ENCODE measurements at regions of chr2 and their contacts with region 1.

Region 1: GRCh38 chr2:119826370-119826961 is 66.7 kb downstream of the PTPN4 start:
- DNase-seq: peak in 4 of 5 donors; percentile 38 to 49 (median 41)
- H3K4me3 ChIP-seq: no peak overlapping the region
- H3K4me3 Mint-ChIP-seq: no peak overlapping the region
- H3K27ac ChIP-seq: no peak overlapping the region
- H3K27ac Mint-ChIP-seq: peak overlapping the region in 2 of 7 donors; percentile 31 to 32
- H3K4me1 ChIP-seq: peaks cover 5% of the 10 kb centered on the region
- H3K4me1 Mint-ChIP-seq: peaks cover 27 to 54% (median 44%) of the 10 kb centered on the region in 4 donors
- H3K27me3 ChIP-seq: no peaks in the 10 kb centered on the region
- H3K27me3 Mint-ChIP-seq: no peaks in the 10 kb centered on the region

Region 2: GRCh38 chr2:119641562-119642258 is 184.8 kb before region 1 on chr2:
- CTCF ChIA-PET with region 1: interaction called, 3 read pairs
- POLR2A ChIA-PET with region 1: no interaction called
- intact Hi-C with region 1: loop called (anchors 1 kb)
- DNase-seq: peak; percentile 56 to 62 (median 60)
- H3K4me3 ChIP-seq: no peak overlapping the region
- H3K4me3 Mint-ChIP-seq: no peak overlapping the region
- H3K27ac ChIP-seq: no peak overlapping the region
- H3K27ac Mint-ChIP-seq: peak overlapping the region in 1 of 7 donors; percentile 37
- H3K4me1 ChIP-seq: no peaks in the 10 kb centered on the region
- H3K4me1 Mint-ChIP-seq: peaks cover 0 to 7% (median 3%) of the 10 kb centered on the region in 4 donors
- H3K27me3 ChIP-seq: no peaks in the 10 kb centered on the region
- H3K27me3 Mint-ChIP-seq: peaks cover 0 to 13% of the 10 kb centered on the region in 2 donors

Region 3: DNA sequence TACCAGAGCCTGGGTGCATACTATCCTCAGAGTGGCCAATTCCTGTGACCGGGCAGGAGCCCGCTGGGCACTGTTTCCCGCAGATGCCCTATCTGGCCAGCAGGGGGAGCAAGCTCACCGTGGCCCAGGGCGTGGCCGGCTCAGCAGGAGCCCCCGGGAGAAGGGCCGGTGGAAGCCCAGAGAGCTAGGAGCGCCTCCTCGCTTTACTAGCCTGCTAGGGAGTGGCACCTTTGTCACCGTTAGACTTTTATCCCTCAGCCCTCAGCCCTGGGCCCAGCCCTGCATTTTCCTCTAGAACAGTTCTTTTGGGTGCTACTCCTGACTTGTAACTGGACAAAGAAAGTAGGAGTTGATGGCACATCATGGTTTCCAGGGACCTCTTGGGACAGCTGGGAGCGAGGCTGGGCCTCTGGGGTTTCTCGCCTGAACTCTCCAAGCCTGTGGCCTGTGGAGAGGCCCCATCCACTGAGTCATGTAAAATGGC is 123.5 kb before region 1 on chr2:
- CTCF ChIA-PET with region 1: interaction called, 6 read pairs
- POLR2A ChIA-PET with region 1: no interaction called
- intact Hi-C with region 1: loop called (anchors 1 kb)
- DNase-seq: peak in 4 of 5 donors; percentile 55 to 69 (median 60)
- H3K4me3 ChIP-seq: no peak overlapping the region
- H3K4me3 Mint-ChIP-seq: peak overlapping the region in 2 of 8 donors; percentile 15 to 20
- H3K27ac ChIP-seq: no peak overlapping the region
- H3K27ac Mint-ChIP-seq: peak overlapping the region in 2 of 7 donors; percentile 22 to 64
- H3K4me1 ChIP-seq: peaks cover 20% of the 10 kb centered on the region
- H3K4me1 Mint-ChIP-seq: peaks cover 1 to 23% (median 13%) of the 10 kb centered on the region in 4 donors
- H3K27me3 ChIP-seq: no peaks in the 10 kb centered on the region
- H3K27me3 Mint-ChIP-seq: no peaks in the 10 kb centered on the region

Region 4: DNA sequence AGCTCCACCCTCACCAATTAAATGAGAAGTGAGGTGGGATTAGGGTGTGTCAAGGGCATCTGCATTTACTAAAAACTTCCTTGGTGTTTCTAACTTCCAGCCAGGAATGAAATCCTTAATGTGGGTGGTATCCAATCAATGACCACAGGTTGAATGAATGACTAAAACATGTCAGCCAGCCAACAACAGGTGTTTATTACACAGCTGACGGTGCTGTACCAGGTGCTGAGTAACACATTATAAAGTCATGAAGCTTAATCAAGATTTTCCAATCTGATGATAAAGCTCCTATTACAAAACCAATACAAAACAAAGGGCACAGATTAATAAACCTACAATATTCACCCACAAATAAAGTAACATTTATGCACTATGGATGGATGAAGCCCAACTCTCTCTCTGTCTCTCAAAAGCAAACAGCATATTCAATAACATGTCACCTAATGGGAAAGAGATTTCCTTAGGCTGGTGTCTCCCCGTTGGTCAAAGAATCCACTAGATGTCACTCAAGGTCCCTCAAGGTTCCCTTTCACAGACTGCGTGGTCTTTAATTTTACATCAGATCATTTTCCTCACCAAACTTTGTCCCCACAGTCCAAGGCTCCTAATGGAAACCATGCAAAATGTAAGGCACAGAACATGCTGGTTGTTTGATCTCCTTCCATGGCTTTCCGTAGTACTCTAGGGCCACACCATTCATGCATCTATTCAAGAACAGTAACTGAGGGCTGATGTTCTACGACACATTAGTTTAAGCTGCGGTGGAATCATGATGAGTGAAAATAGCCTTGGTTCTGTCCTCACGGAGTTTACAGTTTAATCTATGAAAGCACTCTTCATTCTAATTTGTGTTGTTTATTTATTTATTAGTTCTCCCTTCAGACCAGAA is 73.2 kb before region 1 on chr2:
- CTCF ChIA-PET with region 1: interaction called, 91 read pairs
- POLR2A ChIA-PET with region 1: interaction called, 4 read pairs
- intact Hi-C with region 1: loop called (anchors 1 kb)
- DNase-seq: peak in 4 of 5 donors; percentile 47 to 58 (median 56)
- H3K4me3 ChIP-seq: no peak overlapping the region
- H3K4me3 Mint-ChIP-seq: no peak overlapping the region
- H3K27ac ChIP-seq: no peak overlapping the region
- H3K27ac Mint-ChIP-seq: no peak overlapping the region
- H3K4me1 ChIP-seq: no peaks in the 10 kb centered on the region
- H3K4me1 Mint-ChIP-seq: peaks cover under 1 to 5% (median 4%) of the 10 kb centered on the region in 4 donors
- H3K27me3 ChIP-seq: no peaks in the 10 kb centered on the region
- H3K27me3 Mint-ChIP-seq: no peaks in the 10 kb centered on the region